ENCODE measurements at regions of chr17 and their contacts with region 1.

Region 1: GRCh38 chr17:35898283-35899070 is 18.3 kb upstream of the CCL5 start:
- DNase-seq: peak; percentile 87
- ATAC-seq: peak; percentile 42
- H3K4me3 Mint-ChIP-seq: peak overlapping the region; percentile 66
- H3K27ac Mint-ChIP-seq: peak overlapping the region; percentile 91
- H3K4me1 Mint-ChIP-seq: peaks cover 88% of the 10 kb centered on the region
- H3K27me3 Mint-ChIP-seq: no peaks in the 10 kb centered on the region

Region 2: DNA sequence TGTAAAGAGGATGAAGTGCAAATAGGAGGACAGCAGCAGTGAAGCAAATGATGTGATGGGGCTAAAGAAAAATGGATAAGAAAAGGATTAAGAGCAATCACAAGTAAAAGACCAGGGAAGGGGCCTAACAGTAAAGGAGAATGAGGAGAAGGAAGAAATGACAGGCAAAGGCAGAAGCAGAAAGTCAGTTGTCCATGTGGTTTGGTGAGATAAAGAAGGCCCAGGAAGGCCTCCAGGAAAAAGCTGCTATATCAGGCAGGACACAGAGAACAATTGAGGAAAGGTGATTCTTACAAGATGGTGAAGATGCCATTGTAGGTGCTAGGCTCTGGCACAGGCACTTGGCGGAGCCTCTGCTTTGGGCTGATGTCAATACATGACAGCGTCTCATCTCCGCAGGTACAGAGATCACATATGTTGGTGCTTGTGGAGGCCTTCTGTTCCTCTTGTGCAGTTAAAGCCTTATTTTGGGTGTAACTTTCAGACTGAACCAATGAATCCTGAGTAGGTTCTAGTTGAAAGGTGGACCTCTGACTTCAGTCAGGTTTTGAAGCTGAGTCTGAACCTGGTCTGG is 13.9 kb after region 1 on chr17:
- CTCF ChIA-PET with region 1: interaction called, 23 read pairs
- DNase-seq: no peak
- ATAC-seq: no peak
- H3K4me3 Mint-ChIP-seq: no peak overlapping the region
- H3K27ac Mint-ChIP-seq: no peak overlapping the region
- H3K4me1 Mint-ChIP-seq: peaks cover 47% of the 10 kb centered on the region
- H3K27me3 Mint-ChIP-seq: no peaks in the 10 kb centered on the region

Region 3: GRCh38 chr17:35923609-35924114 is 25.2 kb after region 1 on chr17:
- CTCF ChIA-PET with region 1: interaction called, 10 read pairs
- DNase-seq: no peak
- ATAC-seq: no peak
- H3K4me3 Mint-ChIP-seq: no peak overlapping the region
- H3K27ac Mint-ChIP-seq: peak overlapping the region; percentile 32
- H3K4me1 Mint-ChIP-seq: peaks cover 60% of the 10 kb centered on the region
- H3K27me3 Mint-ChIP-seq: no peaks in the 10 kb centered on the region

Measured in activated CD8-positive, alpha-beta memory T cell treated with anti-CD3 and anti-CD28 coated beads, Interleukin-2, amount 10 ng/mL, durations not matched to agents 7 days and 5 days (primary cell).